OCI-LY7 (cell line): ENCODE measurements at regions of chr7 and their contacts with region 1.

Region 1: GRCh38 chr7:76314042-76314721 is 11.7 kb downstream of the HSPB1 start:
- DNase-seq: peak; percentile 94
- H3K4me3 ChIP-seq: peak overlapping the region; percentile 13
- H3K27ac ChIP-seq: no peak overlapping the region
- H3K4me1 ChIP-seq: peaks cover 24% of the 10 kb centered on the region
- CTCF ChIP-seq: peak; percentile 100

Region 2: DNA sequence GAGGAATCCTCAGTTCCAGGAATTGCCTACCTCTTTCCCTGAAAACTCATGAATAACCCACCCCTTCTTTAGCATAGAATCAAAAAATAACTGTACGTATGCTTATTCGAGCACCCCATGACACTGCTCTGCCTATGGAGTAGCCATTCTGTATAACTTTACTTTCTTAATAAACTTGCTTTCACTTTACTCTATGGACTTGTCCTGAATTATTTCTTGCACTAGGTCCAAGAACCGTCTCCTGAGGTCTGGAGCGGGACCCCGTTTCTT is 511.7 kb before region 1 on chr7:
- CTCF ChIA-PET with region 1: no interaction called
- POLR2A ChIA-PET with region 1: no interaction called
- intact Hi-C with region 1: no loop called
- DNase-seq: no peak
- H3K4me3 ChIP-seq: no peak overlapping the region
- H3K27ac ChIP-seq: no peak overlapping the region
- H3K4me1 ChIP-seq: peaks cover 12% of the 10 kb centered on the region
- CTCF ChIP-seq: no peak

Region 3: DNA sequence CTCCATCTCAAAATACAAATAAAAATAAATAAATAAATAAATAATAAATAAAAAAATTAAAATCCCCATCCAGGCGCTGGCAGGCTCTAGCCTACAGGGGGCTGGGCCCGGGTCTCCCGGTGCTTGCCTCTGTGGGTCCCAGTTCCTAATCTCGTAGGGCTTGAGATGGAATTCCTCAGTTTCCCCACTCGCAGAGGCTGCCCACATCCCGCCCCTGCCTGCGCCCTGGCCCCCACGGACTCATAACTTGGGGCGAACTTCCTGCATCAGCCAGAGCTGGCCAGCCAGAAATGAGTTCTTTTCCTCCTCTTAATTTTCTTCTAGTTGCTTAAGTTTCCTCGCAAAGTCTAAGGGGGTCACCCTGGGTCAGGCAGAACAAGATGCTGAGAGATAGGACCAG is 134.5 kb before region 1 on chr7:
- CTCF ChIA-PET with region 1: interaction called, 3 read pairs
- POLR2A ChIA-PET with region 1: interaction called, 4 read pairs
- intact Hi-C with region 1: loop called (anchors 1 kb)
- DNase-seq: no peak
- H3K4me3 ChIP-seq: no peak overlapping the region
- H3K27ac ChIP-seq: no peak overlapping the region
- H3K4me1 ChIP-seq: no peaks in the 10 kb centered on the region
- CTCF ChIP-seq: no peak

Region 4: GRCh38 chr7:76262683-76263402 is 51.3 kb before region 1 on chr7:
- CTCF ChIA-PET with region 1: interaction called, 4 read pairs
- POLR2A ChIA-PET with region 1: no interaction called
- intact Hi-C with region 1: loop called (anchors 1 kb)
- DNase-seq: peak; percentile 51
- H3K4me3 ChIP-seq: no peak overlapping the region
- H3K27ac ChIP-seq: no peak overlapping the region
- H3K4me1 ChIP-seq: peaks cover 4% of the 10 kb centered on the region
- CTCF ChIP-seq: peak; percentile 85

Region 5: DNA sequence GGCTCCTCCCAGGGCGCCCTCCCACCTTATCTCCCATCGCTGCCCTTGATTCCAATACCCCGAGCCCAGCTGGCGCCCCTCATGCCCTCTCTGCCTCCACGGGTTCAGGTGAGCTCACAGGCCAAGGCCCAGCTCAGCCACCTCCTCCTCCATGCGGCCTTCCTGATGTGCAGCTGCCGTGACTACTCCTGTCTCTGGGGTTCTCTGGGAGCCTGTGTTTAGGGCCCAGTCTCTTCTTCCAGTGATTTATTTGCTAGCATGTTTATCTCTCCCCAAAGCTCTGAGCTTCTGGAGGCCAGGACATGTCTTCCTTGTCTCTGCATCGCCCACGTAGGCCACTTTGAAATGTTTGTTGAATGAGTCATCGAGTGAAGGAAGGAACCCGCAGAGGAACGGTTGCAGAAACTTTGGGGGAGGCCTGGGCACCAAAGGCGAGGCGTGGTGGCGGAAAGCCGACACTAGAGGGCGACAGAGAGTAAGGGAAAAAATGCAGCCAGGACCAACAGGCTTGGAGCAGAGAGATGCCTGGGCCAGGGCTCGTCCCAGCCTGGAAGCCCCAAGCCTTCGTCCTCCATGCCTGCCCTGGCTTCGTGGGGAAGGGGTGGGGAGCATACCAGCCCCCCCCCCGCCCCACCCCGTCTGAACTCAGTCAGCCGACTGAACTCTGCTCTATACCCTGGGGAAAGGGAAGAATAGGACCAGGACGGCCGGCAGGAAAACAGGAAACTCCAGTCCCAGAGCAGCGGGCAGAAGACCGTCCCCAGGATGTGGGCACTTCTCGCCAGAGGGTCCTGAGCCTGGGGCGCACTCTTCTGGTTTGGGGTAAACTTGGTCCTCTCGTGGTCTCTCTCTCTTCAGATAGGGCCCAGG is 22.6 kb before region 1 on chr7:
- CTCF ChIA-PET with region 1: interaction called, 15 read pairs
- POLR2A ChIA-PET with region 1: interaction called, 5 read pairs
- intact Hi-C with region 1: loop called (anchors 1 kb)
- DNase-seq: peak; percentile 76
- H3K4me3 ChIP-seq: peak overlapping the region; percentile 35
- H3K27ac ChIP-seq: no peak overlapping the region
- H3K4me1 ChIP-seq: peaks cover 21% of the 10 kb centered on the region
- CTCF ChIP-seq: peak; percentile 92

Region 6: DNA sequence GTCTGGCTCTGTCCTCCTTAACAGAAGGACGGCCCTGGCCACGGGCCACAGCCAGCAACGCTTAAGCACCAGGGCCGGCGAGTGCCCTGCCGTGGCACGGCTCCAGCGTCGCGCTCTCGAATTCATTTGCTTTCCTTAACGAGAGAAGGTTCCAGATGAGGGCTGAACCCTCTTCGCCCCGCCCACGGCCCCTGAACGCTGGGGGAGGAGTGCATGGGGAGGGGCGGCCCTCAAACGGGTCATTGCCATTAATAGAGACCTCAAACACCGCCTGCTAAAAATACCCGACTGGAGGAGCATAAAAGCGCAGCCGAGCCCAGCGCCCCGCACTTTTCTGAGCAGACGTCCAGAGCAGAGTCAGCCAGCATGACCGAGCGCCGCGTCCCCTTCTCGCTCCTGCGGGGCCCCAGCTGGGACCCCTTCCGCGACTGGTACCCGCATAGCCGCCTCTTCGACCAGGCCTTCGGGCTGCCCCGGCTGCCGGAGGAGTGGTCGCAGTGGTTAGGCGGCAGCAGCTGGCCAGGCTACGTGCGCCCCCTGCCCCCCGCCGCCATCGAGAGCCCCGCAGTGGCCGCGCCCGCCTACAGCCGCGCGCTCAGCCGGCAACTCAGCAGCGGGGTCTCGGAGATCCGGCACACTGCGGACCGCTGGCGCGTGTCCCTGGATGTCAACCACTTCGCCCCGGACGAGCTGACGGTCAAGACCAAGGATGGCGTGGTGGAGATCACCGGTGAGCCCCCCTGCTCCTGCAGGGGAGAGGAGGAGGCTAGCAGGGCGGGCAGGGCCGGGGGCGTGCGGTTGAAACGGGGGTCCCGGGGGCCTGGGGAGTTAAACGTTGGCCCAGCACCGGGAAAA is 11.6 kb before region 1 on chr7 and contains the start of gene HSPB1:
- CTCF ChIA-PET with region 1: interaction called, 8 read pairs
- POLR2A ChIA-PET with region 1: interaction called, 14 read pairs
- intact Hi-C with region 1: loop called (anchors 1 kb)
- DNase-seq: peak; percentile 86
- H3K4me3 ChIP-seq: peak within 1 kb of the TSS; percentile 89
- H3K27ac ChIP-seq: peak within 1 kb of the TSS; percentile 81
- H3K4me1 ChIP-seq: peaks cover 44% of the 10 kb centered on the region
- CTCF ChIP-seq: 0 out of 2 replicates have a peak, but pooled peaks have one; percentile 8
- total RNA-seq, gene HSPB1: 133 and 204 TPM in 2 replicates